ENCODE measurements at regions of chr2 and their contacts with region 1.

Region 1: GRCh38 chr2:74147727-74148456 is at the start of gene BOLA3:
- DNase-seq: peak; percentile 73
- H3K4me3 ChIP-seq: peak within 1 kb of the TSS; percentile 76 to 93 (median 77)
- H3K27ac ChIP-seq: no peak within 1 kb of the TSS
- H3K4me1 ChIP-seq: peaks cover 10% of the 10 kb centered on the region
- H3K27me3 ChIP-seq: no peaks in the 10 kb centered on the region
- CTCF ChIP-seq: peak; percentile 66 to 79
- POLR2A ChIP-seq: peak; percentile 81
- total RNA-seq, gene BOLA3: 42.4 and 42.6 TPM in 2 replicates

Region 2: GRCh38 chr2:73822276-73822675 is 325.6 kb before region 1 on chr2:
- CTCF ChIA-PET with region 1: interaction called, 180 read pairs
- POLR2A ChIA-PET with region 1: no interaction called
- dilution Hi-C with region 1: no loop called
- intact Hi-C with region 1: loop called (anchors 1 kb)
- DNase-seq: no peak
- H3K4me3 ChIP-seq: no peak overlapping the region
- H3K27ac ChIP-seq: no peak overlapping the region
- H3K4me1 ChIP-seq: no peaks in the 10 kb centered on the region
- H3K27me3 ChIP-seq: peaks cover 14 to 26% of the 10 kb centered on the region in 2 experiments
- CTCF ChIP-seq: no peak
- POLR2A ChIP-seq: no peak

Region 3: GRCh38 chr2:73907840-73908452 is 239.9 kb before region 1 on chr2:
- CTCF ChIA-PET with region 1: interaction called, 6 read pairs
- POLR2A ChIA-PET with region 1: no interaction called
- dilution Hi-C with region 1: no loop called
- intact Hi-C with region 1: loop called (anchors 5 kb)
- DNase-seq: no peak
- H3K4me3 ChIP-seq: no peak overlapping the region
- H3K27ac ChIP-seq: no peak overlapping the region
- H3K4me1 ChIP-seq: no peaks in the 10 kb centered on the region
- H3K27me3 ChIP-seq: peaks cover 0 to 5% of the 10 kb centered on the region in 2 experiments
- CTCF ChIP-seq: peak; percentile 8 to 9
- POLR2A ChIP-seq: no peak

Region 4: GRCh38 chr2:73985308-73986084 is 162.4 kb before region 1 on chr2:
- CTCF ChIA-PET with region 1: no interaction called
- POLR2A ChIA-PET with region 1: no interaction called
- dilution Hi-C with region 1: no loop called
- intact Hi-C with region 1: loop called (anchors 10 kb)
- DNase-seq: no peak
- H3K4me3 ChIP-seq: peak overlapping the region; percentile 44 to 69 (median 66)
- H3K27ac ChIP-seq: peak overlapping the region; percentile 49
- H3K4me1 ChIP-seq: peaks cover 39% of the 10 kb centered on the region
- H3K27me3 ChIP-seq: no peaks in the 10 kb centered on the region
- CTCF ChIP-seq: no peak
- POLR2A ChIP-seq: no peak

Region 5: DNA sequence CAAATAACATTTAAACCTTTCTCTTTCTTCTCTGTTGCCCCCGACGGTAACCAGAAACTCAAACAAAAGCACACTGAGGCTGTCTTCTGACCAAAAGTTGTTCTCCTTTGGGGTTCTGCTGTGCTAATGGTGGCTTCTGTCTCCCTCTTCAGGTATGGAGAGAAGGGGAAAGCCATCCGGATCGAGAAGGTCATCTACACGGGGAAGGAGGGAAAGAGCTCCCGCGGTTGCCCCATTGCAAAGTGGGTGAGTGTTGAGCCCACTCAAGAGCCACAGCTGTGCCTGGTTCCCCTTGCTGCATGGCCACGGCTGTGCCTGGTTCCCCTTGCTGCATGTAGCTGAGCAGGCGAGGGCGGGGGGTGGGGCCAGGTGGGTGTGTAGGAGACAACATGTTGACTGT is 67.5 kb before region 1 on chr2:
- CTCF ChIA-PET with region 1: no interaction called
- POLR2A ChIA-PET with region 1: no interaction called
- dilution Hi-C with region 1: no loop called
- intact Hi-C with region 1: no loop called
- DNase-seq: no peak
- H3K4me3 ChIP-seq: no peak overlapping the region
- H3K27ac ChIP-seq: no peak overlapping the region
- H3K4me1 ChIP-seq: no peaks in the 10 kb centered on the region
- H3K27me3 ChIP-seq: no peaks in the 10 kb centered on the region
- CTCF ChIP-seq: no peak
- POLR2A ChIP-seq: no peak

Region 6: DNA sequence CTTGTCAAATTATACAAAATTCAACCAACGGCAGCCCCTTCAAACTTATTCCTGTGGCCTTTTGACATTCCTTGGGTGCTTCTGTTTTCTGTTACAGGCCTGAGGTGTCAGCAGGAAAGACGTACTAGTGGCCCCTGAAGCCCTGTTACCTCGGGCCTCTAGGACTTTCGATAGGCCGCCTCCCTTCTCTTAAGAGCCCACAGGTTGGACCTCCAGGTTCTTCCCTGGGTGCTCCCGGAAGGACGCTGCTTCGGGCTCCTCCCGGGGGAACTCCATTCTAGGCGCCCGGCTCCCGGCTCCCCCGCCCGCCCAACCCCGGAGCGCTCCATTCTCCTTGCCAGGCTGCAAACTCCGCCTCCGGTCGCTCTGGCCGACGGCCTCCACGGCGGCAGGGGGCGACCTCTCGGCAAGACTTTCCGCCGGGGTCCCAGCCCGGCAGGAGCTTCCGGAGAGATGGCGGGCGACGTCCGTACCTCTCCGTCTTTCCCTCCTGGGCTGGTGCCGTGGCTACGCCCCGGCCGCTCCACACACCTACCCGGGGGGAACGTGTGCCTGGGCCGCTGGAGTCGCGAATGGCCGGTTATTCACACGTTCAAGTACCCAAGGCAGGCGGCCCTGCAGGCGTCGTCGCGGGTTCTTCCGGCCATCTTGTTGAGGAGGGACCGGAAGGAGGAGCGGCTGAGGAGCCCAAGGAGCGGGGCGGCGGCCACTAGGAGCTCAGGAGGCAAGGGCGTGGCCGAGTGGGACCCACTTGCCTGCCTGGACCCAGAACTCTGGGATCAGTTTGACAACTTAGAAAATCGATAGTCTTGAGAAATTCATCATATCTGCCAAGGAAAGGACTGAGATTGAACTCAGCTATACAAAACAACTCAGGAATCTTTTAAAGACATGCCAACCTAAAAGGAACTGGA is 27.7 kb before region 1 on chr2:
- CTCF ChIA-PET with region 1: interaction called, 19 read pairs
- POLR2A ChIA-PET with region 1: no interaction called
- dilution Hi-C with region 1: no loop called
- intact Hi-C with region 1: loop called (anchors 2 kb)
- DNase-seq: peak; percentile 68
- H3K4me3 ChIP-seq: peak overlapping the region; percentile 65 to 73 (median 66)
- H3K27ac ChIP-seq: no peak overlapping the region
- H3K4me1 ChIP-seq: peaks cover 9% of the 10 kb centered on the region
- H3K27me3 ChIP-seq: peaks cover 0 to 2% of the 10 kb centered on the region in 2 experiments
- CTCF ChIP-seq: peak; percentile 29 to 60
- POLR2A ChIP-seq: no peak

Region 7: GRCh38 chr2:74178201-74179062 is 30.5 kb after region 1 on chr2 and contains the start of gene MOB1A:
- CTCF ChIA-PET with region 1: interaction called, 10 read pairs
- POLR2A ChIA-PET with region 1: interaction called, 4 read pairs
- dilution Hi-C with region 1: no loop called
- intact Hi-C with region 1: no loop called
- DNase-seq: peak; percentile 100
- H3K4me3 ChIP-seq: peak within 1 kb of the TSS; percentile 93 to 100 (median 100)
- H3K27ac ChIP-seq: peak within 1 kb of the TSS; percentile 80
- H3K4me1 ChIP-seq: peaks cover 9% of the 10 kb centered on the region
- H3K27me3 ChIP-seq: no peaks in the 10 kb centered on the region
- CTCF ChIP-seq: no peak
- POLR2A ChIP-seq: peak; percentile 90
- total RNA-seq, gene MOB1A: 106 and 112 TPM in 2 replicates

Region 8: DNA sequence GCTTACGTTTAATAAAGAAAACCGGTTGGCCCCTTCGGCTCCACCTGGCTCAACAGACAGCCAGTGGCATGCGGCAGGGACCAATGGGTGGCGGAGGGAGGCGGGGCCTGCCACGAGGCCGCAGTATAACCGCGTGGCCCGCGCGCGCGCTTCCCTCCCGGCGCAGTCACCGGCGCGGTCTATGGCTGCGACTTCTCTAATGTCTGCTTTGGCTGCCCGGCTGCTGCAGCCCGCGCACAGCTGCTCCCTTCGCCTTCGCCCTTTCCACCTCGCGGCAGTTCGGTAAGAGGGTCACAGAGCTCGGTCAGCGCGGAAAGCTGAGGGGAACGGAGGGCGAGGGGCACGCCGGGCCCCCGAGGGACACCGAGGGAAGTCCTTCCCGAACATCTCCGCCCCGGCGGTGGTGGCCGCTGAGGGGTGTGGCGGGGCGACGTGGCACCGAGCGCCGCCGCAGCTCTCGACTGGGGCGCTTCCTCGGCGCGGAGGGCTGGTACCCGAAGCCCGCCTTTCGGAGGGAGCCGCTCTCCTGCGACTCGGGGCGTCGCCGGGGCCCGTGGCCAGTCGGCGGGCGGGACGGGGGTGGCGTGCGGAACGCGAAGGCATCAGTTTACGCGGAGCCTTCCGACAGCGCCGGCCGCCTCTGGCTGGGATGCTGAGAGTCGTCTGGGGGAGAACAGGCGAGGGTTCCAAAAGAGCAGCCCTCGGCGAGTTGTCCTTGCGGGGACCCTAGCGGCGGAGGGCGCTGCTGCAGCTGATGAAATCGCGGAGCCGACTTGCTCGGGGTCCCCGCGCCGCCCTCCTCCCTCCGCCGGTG is 50.8 kb after region 1 on chr2 and contains the start of gene MTHFD2:
- CTCF ChIA-PET with region 1: interaction called, 6 read pairs
- POLR2A ChIA-PET with region 1: interaction called, 6 read pairs
- dilution Hi-C with region 1: no loop called
- intact Hi-C with region 1: loop called (anchors 2 kb)
- DNase-seq: peak; percentile 97
- H3K4me3 ChIP-seq: peak within 1 kb of the TSS; percentile 76 to 90 (median 80)
- H3K27ac ChIP-seq: peak within 1 kb of the TSS; percentile 65
- H3K4me1 ChIP-seq: peaks cover 17% of the 10 kb centered on the region
- H3K27me3 ChIP-seq: no peaks in the 10 kb centered on the region
- CTCF ChIP-seq: peak; percentile 69 to 95
- POLR2A ChIP-seq: peak; percentile 91
- total RNA-seq, gene MTHFD2: 74.9 and 83.2 TPM in 2 replicates

Region 9: DNA sequence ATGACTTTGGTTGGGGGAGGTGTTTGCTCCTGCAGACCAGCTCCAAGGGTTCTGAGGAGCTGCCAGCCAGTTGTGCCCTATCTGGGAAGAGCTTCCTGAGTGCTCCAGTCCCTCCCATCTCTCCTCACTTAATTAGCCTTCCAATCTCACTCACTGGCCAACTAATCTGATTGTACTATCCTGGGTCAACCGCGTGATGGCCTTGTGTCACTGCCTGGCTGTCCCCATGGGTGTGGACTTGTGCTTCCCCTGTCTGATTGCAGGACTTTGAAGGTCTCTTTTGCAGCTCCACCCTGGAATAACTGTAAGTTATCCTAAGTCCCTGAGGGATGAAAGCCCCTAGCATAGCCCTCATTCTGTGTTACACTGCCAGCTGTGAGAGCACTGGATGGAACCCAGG is 130.3 kb after region 1 on chr2:
- CTCF ChIA-PET with region 1: no interaction called
- POLR2A ChIA-PET with region 1: no interaction called
- dilution Hi-C with region 1: no loop called
- intact Hi-C with region 1: no loop called
- DNase-seq: no peak
- H3K4me3 ChIP-seq: no peak overlapping the region
- H3K27ac ChIP-seq: no peak overlapping the region
- H3K4me1 ChIP-seq: no peaks in the 10 kb centered on the region
- H3K27me3 ChIP-seq: peaks cover 7 to 10% of the 10 kb centered on the region in 2 experiments
- CTCF ChIP-seq: no peak
- POLR2A ChIP-seq: no peak